ENCODE measurements at regions of chr20 and their contacts with region 1.

Region 1: GRCh38 chr20:20360464-20360863 is 7.4 kb upstream of the INSM1 start:
- DNase-seq: peak; percentile 49
- H3K4me3 ChIP-seq: no peak overlapping the region
- H3K27ac ChIP-seq: no peak overlapping the region
- H3K4me1 ChIP-seq: no peaks in the 10 kb centered on the region
- H3K27me3 ChIP-seq: peaks cover 20% of the 10 kb centered on the region
- CTCF ChIP-seq: peak; percentile 59 to 80 (median 72)
- POLR2A ChIP-seq: no peak

Region 2: GRCh38 chr20:20561841-20562240 is 201.4 kb after region 1 on chr20:
- intact Hi-C with region 1: loop called (anchors 2 kb)
- DNase-seq: no peak
- H3K4me3 ChIP-seq: no peak overlapping the region
- H3K27ac ChIP-seq: no peak overlapping the region
- H3K4me1 ChIP-seq: no peaks in the 10 kb centered on the region
- H3K27me3 ChIP-seq: no peaks in the 10 kb centered on the region
- CTCF ChIP-seq: no peak
- POLR2A ChIP-seq: no peak

Measured in prostate gland (tissue), 2 donors.